HepG2 (cell line): ENCODE measurements at regions of chr6 and their contacts with region 1.

Region 1: GRCh38 chr6:12150812-12151432 is 138.8 kb downstream of the HIVEP1 start:
- DNase-seq: peak; percentile 38
- ATAC-seq: peak; percentile 90
- H3K4me3 ChIP-seq: no peak overlapping the region
- H3K27ac ChIP-seq: no peak overlapping the region
- H3K4me1 ChIP-seq: no peaks in the 10 kb centered on the region
- H3K27me3 ChIP-seq: no peaks in the 10 kb centered on the region
- CTCF ChIP-seq: peak; percentile 81
- EP300 ChIP-seq: no peak
- POLR2A ChIP-seq: no peak
- RAD21 ChIP-seq: peak; percentile 70

Region 2: DNA sequence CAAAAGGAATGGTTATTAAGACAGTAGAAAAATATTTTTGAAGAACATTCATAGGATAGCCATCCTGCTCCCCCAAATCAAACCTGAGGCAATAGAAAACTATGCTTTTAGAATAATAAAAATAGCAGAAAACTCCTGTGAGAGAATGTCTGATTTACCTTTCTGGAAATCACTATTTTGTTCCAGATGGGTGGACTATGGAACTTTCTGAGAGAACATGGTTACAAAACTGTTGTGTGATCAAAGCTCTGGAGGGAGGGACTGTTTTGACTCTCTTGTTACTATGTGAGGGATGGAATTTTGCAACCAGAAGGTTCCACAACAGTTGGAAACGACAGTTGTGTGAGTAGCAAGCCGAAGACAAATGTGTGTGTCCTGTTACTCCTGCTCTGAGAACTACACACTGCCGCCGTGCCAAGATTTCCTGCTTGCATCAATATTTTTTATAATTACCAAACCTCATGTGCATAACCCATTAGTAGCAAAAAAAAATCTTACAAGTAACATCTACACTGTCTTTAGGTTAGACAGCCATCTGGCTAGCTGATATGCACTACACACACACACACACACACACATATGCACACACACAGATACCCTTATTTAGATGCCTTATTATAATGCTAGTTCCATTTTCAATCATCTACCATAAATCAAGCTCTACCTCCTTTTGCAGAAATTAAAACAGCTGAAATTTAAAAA is 149.8 kb before region 1 on chr6:
- CTCF ChIA-PET with region 1: no interaction called
- POLR2A ChIA-PET with region 1: no interaction called
- in situ Hi-C with region 1: no loop called
- intact Hi-C with region 1: no loop called
- DNase-seq: peak; percentile 84
- ATAC-seq: peak; percentile 91
- H3K4me3 ChIP-seq: peak overlapping the region in 2 of 3 experiments; percentile 32 to 52; a peak in 3 of 6 replicates
- H3K27ac ChIP-seq: peak overlapping the region; percentile 60
- H3K4me1 ChIP-seq: peaks cover 30% of the 10 kb centered on the region
- H3K27me3 ChIP-seq: no peaks in the 10 kb centered on the region; a peak in 1 of 5 replicates
- CTCF ChIP-seq: no peak
- EP300 ChIP-seq: peak; percentile 66 to 75; a peak in 1 of 4 replicates
- POLR2A ChIP-seq: peak in 1 of 2 experiments; percentile 72; a peak in 1 of 4 replicates
- RAD21 ChIP-seq: no peak

Region 3: GRCh38 chr6:12504319-12504966 is 353.5 kb after region 1 on chr6:
- CTCF ChIA-PET with region 1: no interaction called
- POLR2A ChIA-PET with region 1: no interaction called
- in situ Hi-C with region 1: no loop called
- intact Hi-C with region 1: loop called (anchors 2 kb)
- DNase-seq: peak; percentile 47
- ATAC-seq: peak; percentile 96
- H3K4me3 ChIP-seq: no peak overlapping the region
- H3K27ac ChIP-seq: no peak overlapping the region
- H3K4me1 ChIP-seq: no peaks in the 10 kb centered on the region
- H3K27me3 ChIP-seq: no peaks in the 10 kb centered on the region
- CTCF ChIP-seq: peak; percentile 81
- EP300 ChIP-seq: no peak
- POLR2A ChIP-seq: no peak
- RAD21 ChIP-seq: peak; percentile 48

Region 4: GRCh38 chr6:12605888-12606345 is 455.0 kb after region 1 on chr6:
- CTCF ChIA-PET with region 1: interaction called, 12 read pairs
- POLR2A ChIA-PET with region 1: no interaction called
- in situ Hi-C with region 1: loop called (anchors 10 kb)
- intact Hi-C with region 1: loop called (anchors 1 kb)
- DNase-seq: peak; percentile 72
- ATAC-seq: peak; percentile 97
- H3K4me3 ChIP-seq: no peak overlapping the region
- H3K27ac ChIP-seq: no peak overlapping the region
- H3K4me1 ChIP-seq: no peaks in the 10 kb centered on the region
- H3K27me3 ChIP-seq: no peaks in the 10 kb centered on the region
- CTCF ChIP-seq: peak; percentile 93
- EP300 ChIP-seq: no peak
- POLR2A ChIP-seq: no peak
- RAD21 ChIP-seq: peak; percentile 76

Region 5: DNA sequence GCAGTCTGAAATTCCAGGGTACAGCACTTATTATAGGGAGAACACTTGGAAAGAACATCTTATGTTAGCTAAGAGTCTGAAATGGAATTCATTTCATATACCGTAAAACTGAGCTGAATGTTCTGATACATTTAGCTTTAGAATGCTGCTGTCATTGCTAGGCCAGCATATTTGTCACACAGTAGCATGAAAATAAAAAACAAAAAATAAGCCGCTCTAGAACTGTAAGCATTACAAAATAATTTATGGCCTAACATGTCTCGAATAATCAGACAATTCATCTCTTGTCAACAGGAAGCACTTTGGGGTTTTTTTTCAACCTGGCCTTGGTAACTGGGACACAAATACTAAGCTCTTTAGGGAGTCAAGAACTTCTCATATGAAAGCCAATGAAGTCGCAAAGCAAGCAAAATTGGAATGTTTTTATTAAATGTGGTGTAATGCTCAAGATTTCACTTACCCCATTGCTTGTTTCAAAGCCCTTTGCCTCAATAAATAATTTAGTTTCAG is 681.4 kb after region 1 on chr6:
- CTCF ChIA-PET with region 1: no interaction called
- POLR2A ChIA-PET with region 1: no interaction called
- in situ Hi-C with region 1: no loop called
- intact Hi-C with region 1: no loop called
- DNase-seq: no peak
- ATAC-seq: no peak
- H3K4me3 ChIP-seq: no peak overlapping the region
- H3K27ac ChIP-seq: no peak overlapping the region
- H3K4me1 ChIP-seq: no peaks in the 10 kb centered on the region
- H3K27me3 ChIP-seq: 0 out of 5 replicates have a peak, but pooled peaks cover 0 to 3% of the 10 kb centered on the region in 2 experiments
- CTCF ChIP-seq: no peak
- EP300 ChIP-seq: no peak
- POLR2A ChIP-seq: no peak
- RAD21 ChIP-seq: no peak